Activated CD8-positive, alpha-beta T cell treated with anti-CD3 and anti-CD28 coated beads, Interleukin-2, amount 10 ng/mL, durations not matched to agents 7 days and 5 days (primary cell): ENCODE measurements at regions of chr1 and their contacts with region 1.

Region 1: GRCh38 chr1:247936415-247936814 is 11.7 kb downstream of the OR2AJ1 start:
- DNase-seq: no peak
- ATAC-seq: no peak
- H3K4me3 Mint-ChIP-seq: no peak overlapping the region
- H3K27ac Mint-ChIP-seq: no peak overlapping the region
- H3K4me1 Mint-ChIP-seq: no peaks in the 10 kb centered on the region
- H3K27me3 Mint-ChIP-seq: no peaks in the 10 kb centered on the region

Region 2: GRCh38 chr1:247923941-247924340 is 12.5 kb before region 1 on chr1:
- CTCF ChIA-PET with region 1: interaction called, 11 read pairs
- POLR2A ChIA-PET with region 1: no interaction called
- DNase-seq: no peak
- ATAC-seq: no peak
- H3K4me3 Mint-ChIP-seq: no peak overlapping the region
- H3K27ac Mint-ChIP-seq: no peak overlapping the region
- H3K4me1 Mint-ChIP-seq: no peaks in the 10 kb centered on the region
- H3K27me3 Mint-ChIP-seq: no peaks in the 10 kb centered on the region